Dendritic cell treated with granulocyte-macrophage colony-stimulating factor and Interleukin-4, amounts not matched to agents 40 ng/mL and 50 ng/mL, for 4 days (primary cell): ENCODE measurements at regions of chr5 and their contacts with region 1.

Region 1: DNA sequence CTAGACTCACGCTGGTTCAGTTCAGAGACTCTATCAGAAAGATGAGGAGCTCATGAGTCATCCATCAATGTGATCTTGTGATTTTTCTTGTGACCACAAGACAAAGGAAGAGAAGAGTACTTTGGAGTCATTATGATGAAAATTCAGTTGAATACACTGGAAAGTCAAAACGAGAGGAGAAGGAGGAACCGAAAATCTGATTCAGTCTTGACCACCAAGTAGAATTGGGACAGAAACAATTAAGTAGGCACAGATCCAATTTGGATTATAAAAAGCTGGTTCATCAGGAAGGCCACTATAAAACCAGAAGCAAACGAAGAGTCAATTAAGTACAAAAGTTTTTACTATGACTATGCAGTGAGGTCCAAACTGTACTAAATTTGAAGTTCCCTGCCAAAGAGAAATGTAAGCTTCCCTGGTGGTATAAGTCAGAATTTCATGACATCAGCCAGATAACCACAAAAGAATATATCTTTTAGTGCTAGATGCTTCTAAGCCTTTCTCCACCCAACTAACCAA is 90.9 kb downstream of the THBS4 start:
- H3K4me3 Mint-ChIP-seq: peak overlapping the region; percentile 28
- H3K27ac Mint-ChIP-seq: peak overlapping the region; percentile 100
- H3K4me1 Mint-ChIP-seq: peaks cover 68% of the 10 kb centered on the region
- H3K27me3 Mint-ChIP-seq: no peaks in the 10 kb centered on the region

Region 2: GRCh38 chr5:80093796-80094195 is 32.2 kb before region 1 on chr5:
- intact Hi-C with region 1: loop called (anchors 5 kb)
- H3K4me3 Mint-ChIP-seq: no peak overlapping the region
- H3K27ac Mint-ChIP-seq: no peak overlapping the region
- H3K4me1 Mint-ChIP-seq: peaks cover 20% of the 10 kb centered on the region
- H3K27me3 Mint-ChIP-seq: no peaks in the 10 kb centered on the region

Region 3: GRCh38 chr5:80141147-80141671 is 15.2 kb after region 1 on chr5:
- intact Hi-C with region 1: loop called (anchors 2 kb)
- H3K4me3 Mint-ChIP-seq: no peak overlapping the region
- H3K27ac Mint-ChIP-seq: peak overlapping the region; percentile 89
- H3K4me1 Mint-ChIP-seq: peaks cover 86% of the 10 kb centered on the region
- H3K27me3 Mint-ChIP-seq: no peaks in the 10 kb centered on the region

Region 4: GRCh38 chr5:80184235-80185023 is 58.4 kb after region 1 on chr5:
- intact Hi-C with region 1: loop called (anchors 1 kb)
- H3K4me3 Mint-ChIP-seq: no peak overlapping the region
- H3K27ac Mint-ChIP-seq: peak overlapping the region; percentile 75
- H3K4me1 Mint-ChIP-seq: peaks cover 80% of the 10 kb centered on the region
- H3K27me3 Mint-ChIP-seq: no peaks in the 10 kb centered on the region

Region 5: GRCh38 chr5:80246001-80246758 is 120.2 kb after region 1 on chr5:
- intact Hi-C with region 1: loop called (anchors 2 kb)
- H3K4me3 Mint-ChIP-seq: peak overlapping the region; percentile 23
- H3K27ac Mint-ChIP-seq: peak overlapping the region; percentile 83
- H3K4me1 Mint-ChIP-seq: peaks cover 61% of the 10 kb centered on the region
- H3K27me3 Mint-ChIP-seq: no peaks in the 10 kb centered on the region

Region 6: GRCh38 chr5:80255732-80256479 is 129.9 kb after region 1 on chr5 and contains the start of gene SERINC5:
- intact Hi-C with region 1: loop called (anchors 1 kb)
- H3K4me3 Mint-ChIP-seq: peak within 1 kb of the TSS; percentile 100
- H3K27ac Mint-ChIP-seq: peak within 1 kb of the TSS; percentile 100
- H3K4me1 Mint-ChIP-seq: peaks cover 50% of the 10 kb centered on the region
- H3K27me3 Mint-ChIP-seq: no peaks in the 10 kb centered on the region

Region 7: GRCh38 chr5:80407735-80408482 is 281.9 kb after region 1 on chr5 and contains the start of gene ZFYVE16:
- intact Hi-C with region 1: loop called (anchors 5 kb)
- H3K4me3 Mint-ChIP-seq: peak within 1 kb of the TSS; percentile 89
- H3K27ac Mint-ChIP-seq: peak within 1 kb of the TSS; percentile 99
- H3K4me1 Mint-ChIP-seq: peaks cover 46% of the 10 kb centered on the region
- H3K27me3 Mint-ChIP-seq: no peaks in the 10 kb centered on the region